GM10248 (cell line): ENCODE measurements at regions of chr6 and their contacts with region 1.

Region 1: DNA sequence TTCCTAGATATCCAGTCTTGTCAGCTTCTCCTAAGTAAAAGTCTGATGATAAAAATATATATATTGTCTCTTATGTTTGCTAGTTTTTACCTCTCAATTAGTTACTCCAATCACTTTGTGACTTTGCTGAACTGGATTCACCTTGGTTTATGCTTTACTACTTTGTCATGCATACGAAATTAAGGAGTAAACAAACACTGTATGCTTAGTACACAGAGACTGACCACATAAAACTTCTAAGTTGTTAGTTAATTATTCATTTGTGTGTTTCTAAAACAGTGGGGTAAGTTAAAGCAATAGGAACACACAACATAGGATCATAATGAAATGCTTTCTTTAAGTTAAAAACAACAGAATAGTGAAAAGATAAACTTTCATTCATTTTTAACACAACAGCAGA is 877.3 kb upstream of the MAP3K7 start:
- DNase-seq: no peak
- CTCF ChIP-seq: no peak

Region 2: DNA sequence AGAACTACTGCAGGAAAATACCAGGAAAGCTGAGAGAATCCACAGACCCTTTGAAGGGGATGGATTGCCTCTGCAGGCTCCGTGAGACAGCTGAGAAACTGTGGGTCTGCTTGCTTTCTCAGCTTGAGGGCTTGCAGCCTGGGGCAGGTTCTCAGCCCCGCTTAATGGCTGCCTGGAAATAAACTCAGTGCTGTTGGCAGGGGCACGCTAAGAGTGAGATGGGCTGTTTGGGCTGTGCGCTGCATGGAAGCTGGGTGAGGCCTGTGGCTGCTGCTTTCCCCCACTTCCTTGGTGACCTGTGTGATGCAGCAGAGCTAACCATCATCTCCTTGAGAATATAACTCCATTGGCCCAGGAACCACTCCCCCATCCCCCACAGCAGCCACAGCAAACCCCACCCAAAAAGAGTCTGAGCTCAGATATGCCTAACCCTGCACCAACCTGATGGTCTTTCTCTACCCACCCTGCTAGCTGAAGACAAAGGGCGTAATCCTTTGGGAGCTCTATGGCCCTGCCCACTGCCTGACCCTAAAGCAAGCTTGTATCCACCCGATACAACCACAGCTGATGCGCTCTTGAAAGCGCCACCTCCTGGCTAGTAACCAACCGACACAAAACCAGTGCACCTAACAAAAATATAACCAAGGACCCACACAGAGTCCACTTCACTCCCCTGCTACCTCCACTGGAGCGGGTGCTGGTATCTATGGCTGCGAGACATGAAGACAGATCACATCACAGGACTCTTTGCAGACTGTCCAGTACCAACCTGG is 76.7 kb before region 1 on chr6:
- CTCF ChIA-PET with region 1: no interaction called
- POLR2A ChIA-PET with region 1: no interaction called
- DNase-seq: no peak
- CTCF ChIP-seq: no peak

Region 3: GRCh38 chr6:91412532-91412931 is 51.7 kb before region 1 on chr6:
- CTCF ChIA-PET with region 1: no interaction called
- POLR2A ChIA-PET with region 1: no interaction called
- DNase-seq: no peak
- CTCF ChIP-seq: no peak

Region 4: GRCh38 chr6:91475975-91476374 is 11.8 kb after region 1 on chr6:
- CTCF ChIA-PET with region 1: interaction called, 12 read pairs
- POLR2A ChIA-PET with region 1: no interaction called
- DNase-seq: peak; percentile 8
- CTCF ChIP-seq: no peak

Region 5: DNA sequence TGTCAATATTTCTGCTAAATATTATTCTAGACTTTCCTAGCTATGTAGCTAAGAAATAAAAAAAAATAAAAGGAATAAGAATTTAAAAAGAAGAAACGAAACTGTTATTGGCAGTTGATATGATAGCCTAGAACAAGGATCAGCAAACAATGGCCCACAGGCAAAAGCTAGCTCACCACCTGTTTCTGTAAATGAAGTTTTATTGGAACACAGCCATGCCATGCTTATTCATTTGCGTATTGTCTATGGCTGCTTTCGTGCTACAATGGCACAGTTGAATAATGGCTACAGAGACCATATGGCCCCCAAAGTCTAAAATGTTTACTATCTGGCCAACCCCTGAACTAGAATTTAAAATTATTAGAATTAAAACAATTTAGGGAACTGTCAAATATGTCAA is 75.3 kb after region 1 on chr6:
- CTCF ChIA-PET with region 1: no interaction called
- POLR2A ChIA-PET with region 1: no interaction called
- DNase-seq: no peak
- CTCF ChIP-seq: no peak